H1 (cell line): ENCODE measurements at regions of chr10 and their contacts with region 1.

Region 1: GRCh38 chr10:124194199-124194824 is 100.9 kb upstream of the CHST15 start:
- DNase-seq: no peak
- H3K4me3 ChIP-seq: no peak overlapping the region
- H3K27ac ChIP-seq: no peak overlapping the region
- H3K4me1 ChIP-seq: no peaks in the 10 kb centered on the region
- H3K27me3 ChIP-seq: no peaks in the 10 kb centered on the region
- CTCF ChIP-seq: no peak
- EP300 ChIP-seq: no peak
- POLR2A ChIP-seq: no peak
- RAD21 ChIP-seq: no peak

Region 2: DNA sequence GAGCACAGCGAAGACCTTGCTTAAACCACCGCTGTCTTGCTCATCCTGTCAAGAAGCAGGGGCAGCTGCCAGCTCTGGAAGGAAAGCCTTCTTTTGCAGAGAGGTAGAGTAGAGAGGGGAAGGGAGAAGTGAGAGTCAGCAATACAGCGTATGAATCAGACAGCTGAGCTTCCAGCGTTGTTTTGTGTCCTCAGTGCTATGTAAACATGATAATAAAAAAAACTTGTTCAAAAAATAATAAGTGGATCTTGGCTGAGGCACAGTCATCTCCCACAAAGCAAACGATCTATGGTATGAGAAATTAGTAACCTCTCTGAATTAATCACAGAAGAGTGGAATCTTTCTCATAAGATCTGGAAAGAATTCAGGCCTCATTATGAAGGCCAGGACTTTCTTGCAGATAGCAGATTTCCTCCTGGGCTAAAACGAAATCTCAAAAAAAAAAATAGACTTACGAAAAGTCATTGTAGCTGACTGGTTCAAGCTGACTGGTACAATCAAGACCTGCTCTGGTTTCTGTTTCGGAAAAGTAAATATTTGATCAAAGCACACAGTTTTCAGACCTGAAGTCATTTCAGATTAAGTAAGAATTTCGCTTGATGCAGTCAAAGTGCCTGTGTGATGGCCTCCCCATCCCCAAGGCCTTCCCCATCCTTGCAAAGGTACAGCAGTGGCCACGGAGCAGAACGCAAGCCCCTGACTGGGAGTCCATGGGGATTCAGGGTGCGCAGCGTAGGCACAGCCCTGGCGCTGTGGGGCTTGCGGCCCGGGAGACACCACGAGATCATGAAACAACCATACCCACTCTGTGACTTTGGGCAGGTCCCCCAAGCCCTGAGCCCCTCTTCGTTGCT is 130.3 kb before region 1 on chr10:
- CTCF ChIA-PET with region 1: no interaction called
- POLR2A ChIA-PET with region 1: no interaction called
- DNase-seq: no peak
- H3K4me3 ChIP-seq: no peak overlapping the region
- H3K27ac ChIP-seq: no peak overlapping the region
- H3K4me1 ChIP-seq: peaks cover 2 to 28% (median 19%) of the 10 kb centered on the region in 4 experiments; a peak in 6 of 7 replicates
- H3K27me3 ChIP-seq: no peaks in the 10 kb centered on the region; a peak in 1 of 7 replicates
- CTCF ChIP-seq: no peak
- EP300 ChIP-seq: no peak
- POLR2A ChIP-seq: no peak
- RAD21 ChIP-seq: no peak

Region 3: DNA sequence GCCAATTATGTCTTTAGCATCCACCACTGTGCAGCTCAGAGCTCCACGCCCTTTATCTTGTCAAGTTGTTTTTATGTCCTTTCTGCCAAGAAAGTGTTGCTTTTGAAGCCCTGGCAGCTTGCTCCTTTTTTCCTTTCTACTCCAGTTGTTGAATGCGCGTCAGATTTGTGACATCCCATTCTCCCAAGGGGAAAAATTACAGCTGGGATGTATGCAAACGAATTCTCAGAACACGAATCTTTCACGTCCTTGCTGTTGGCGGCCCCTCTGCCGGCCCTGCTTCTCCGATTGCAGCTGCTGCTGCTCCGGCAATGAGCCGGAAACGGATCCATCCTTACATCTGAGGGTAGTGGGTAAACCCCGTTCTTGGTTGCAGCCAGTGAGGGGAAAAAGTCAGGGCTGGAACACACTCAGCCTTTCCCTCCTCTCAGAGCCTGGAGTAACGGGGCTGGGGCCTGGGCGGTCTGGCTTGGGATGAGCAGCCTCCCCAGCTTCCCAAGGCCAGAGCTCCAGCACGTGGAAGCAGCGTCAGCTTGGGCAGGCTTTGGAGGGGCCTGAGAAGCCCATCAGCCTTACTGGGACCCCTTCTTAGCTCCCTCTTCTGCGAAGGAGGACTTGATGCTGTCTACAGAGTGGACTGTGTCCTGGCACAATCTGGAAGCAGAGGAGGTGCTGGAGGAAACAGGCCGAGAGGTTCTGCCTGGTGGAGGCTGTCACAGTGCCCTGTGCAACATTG is 22.0 kb before region 1 on chr10:
- CTCF ChIA-PET with region 1: interaction called, 20 read pairs
- POLR2A ChIA-PET with region 1: no interaction called
- DNase-seq: peak in 1 of 2 experiments; percentile 40
- H3K4me3 ChIP-seq: no peak overlapping the region
- H3K27ac ChIP-seq: no peak overlapping the region
- H3K4me1 ChIP-seq: no peaks in the 10 kb centered on the region; a peak in 2 of 7 replicates
- H3K27me3 ChIP-seq: no peaks in the 10 kb centered on the region
- CTCF ChIP-seq: no peak
- EP300 ChIP-seq: no peak
- POLR2A ChIP-seq: no peak
- RAD21 ChIP-seq: no peak

Region 4: DNA sequence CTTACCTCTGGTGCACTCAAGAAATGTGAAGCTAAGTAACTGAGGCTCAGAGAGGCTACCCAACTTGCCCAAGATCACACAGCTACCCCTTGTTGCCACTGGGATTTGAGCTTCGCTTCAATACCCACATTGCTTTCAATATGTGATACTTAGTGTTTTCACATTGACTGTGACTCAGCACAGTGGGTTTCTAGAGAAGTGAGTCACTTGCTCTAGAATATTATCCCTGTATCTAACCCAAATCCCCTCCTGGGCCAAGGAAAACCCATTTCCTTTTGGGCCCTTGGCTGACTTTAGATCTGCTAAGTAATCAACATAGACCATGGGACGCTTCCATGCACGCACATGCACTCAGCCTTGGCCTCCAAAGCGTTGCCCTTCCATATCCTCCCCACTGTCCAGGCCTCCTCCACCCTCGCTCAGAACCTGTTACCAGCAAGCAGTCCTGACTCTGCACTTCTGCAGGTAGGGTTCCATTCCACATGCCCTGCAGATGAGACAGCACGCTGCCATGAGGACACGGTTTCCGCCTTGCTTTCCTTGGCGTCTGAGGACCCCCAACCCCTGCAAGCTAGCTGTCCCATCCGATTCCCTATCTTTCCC is 13.3 kb before region 1 on chr10:
- CTCF ChIA-PET with region 1: interaction called, 13 read pairs
- POLR2A ChIA-PET with region 1: no interaction called
- DNase-seq: peak in 1 of 2 experiments; percentile 7
- H3K4me3 ChIP-seq: no peak overlapping the region
- H3K27ac ChIP-seq: no peak overlapping the region
- H3K4me1 ChIP-seq: no peaks in the 10 kb centered on the region; a peak in 1 of 7 replicates
- H3K27me3 ChIP-seq: no peaks in the 10 kb centered on the region
- CTCF ChIP-seq: no peak
- EP300 ChIP-seq: no peak
- POLR2A ChIP-seq: no peak
- RAD21 ChIP-seq: no peak

Region 5: DNA sequence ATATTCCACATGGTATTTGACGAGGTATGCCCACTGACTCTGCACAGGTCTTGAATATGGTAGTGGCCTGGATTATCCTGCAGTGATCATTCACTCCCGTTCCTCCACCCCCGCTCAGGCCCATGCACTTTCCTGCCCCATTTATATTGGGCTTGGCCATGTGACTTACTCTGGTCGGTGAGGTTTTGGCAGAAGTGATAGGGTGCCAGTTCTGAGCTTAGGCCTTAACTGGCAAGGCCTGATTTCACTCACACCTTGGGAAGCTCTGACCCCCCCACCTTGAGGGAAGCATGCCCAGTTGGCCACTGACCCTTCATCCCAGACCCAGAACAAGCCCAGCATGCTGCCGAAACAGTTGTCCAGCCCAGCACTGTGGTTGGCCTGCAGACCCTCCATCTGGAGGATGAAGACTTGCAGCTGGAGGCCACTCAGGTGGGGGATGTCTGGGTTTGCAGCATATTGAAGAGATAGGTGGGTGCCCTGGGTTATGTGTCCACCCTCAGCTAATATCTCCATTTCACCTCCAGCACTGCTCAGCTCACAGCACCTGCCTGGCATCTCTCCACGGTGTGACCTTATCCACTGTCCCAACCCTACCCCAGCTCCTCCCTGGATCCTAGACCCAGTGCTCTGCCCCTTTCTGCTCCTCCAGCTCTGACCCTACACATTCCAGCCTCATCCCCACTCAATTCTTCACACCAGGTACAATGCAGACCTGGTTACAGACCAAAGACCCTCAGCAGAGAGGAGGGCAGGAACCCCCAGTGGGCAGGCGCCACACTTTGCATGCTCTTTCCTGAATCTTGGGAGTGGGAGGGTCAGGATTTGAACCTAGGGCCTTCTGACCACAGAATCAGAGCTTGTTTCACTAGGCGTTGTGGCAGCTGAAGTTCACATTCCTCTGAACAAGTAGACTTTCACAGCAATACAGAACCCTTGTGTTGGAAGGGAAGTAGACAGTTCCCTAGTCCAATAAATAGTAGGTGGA is 37.1 kb after region 1 on chr10:
- CTCF ChIA-PET with region 1: no interaction called
- POLR2A ChIA-PET with region 1: no interaction called
- DNase-seq: no peak
- H3K4me3 ChIP-seq: no peak overlapping the region
- H3K27ac ChIP-seq: no peak overlapping the region
- H3K4me1 ChIP-seq: no peaks in the 10 kb centered on the region; a peak in 1 of 7 replicates
- H3K27me3 ChIP-seq: no peaks in the 10 kb centered on the region; a peak in 1 of 7 replicates
- CTCF ChIP-seq: no peak
- EP300 ChIP-seq: no peak
- POLR2A ChIP-seq: no peak
- RAD21 ChIP-seq: no peak